ENCODE measurements at regions of chr11 and their contacts with region 1.

Region 1: GRCh38 chr11:114262681-114263512 is 33.3 kb upstream of the NNMT start:
- DNase-seq: peak in 4 of 5 donors; percentile 17 to 28 (median 21)
- H3K4me3 ChIP-seq: no peak overlapping the region
- H3K4me3 Mint-ChIP-seq: no peak overlapping the region
- H3K27ac ChIP-seq: no peak overlapping the region
- H3K27ac Mint-ChIP-seq: no peak overlapping the region
- H3K4me1 ChIP-seq: no peaks in the 10 kb centered on the region
- H3K4me1 Mint-ChIP-seq: peaks cover 0 to 3% (median 0%) of the 10 kb centered on the region in 4 donors
- H3K27me3 ChIP-seq: peaks cover 3% of the 10 kb centered on the region
- H3K27me3 Mint-ChIP-seq: peaks cover 0 to 6% of the 10 kb centered on the region in 2 donors

Region 2: GRCh38 chr11:113896156-113896879 is 366.6 kb before region 1 on chr11:
- CTCF ChIA-PET with region 1: interaction called, 315 read pairs
- POLR2A ChIA-PET with region 1: interaction called, 8 read pairs
- intact Hi-C with region 1: loop called (anchors 1 kb)
- DNase-seq: peak in 3 of 5 donors; percentile 26 to 42 (median 39)
- H3K4me3 ChIP-seq: no peak overlapping the region
- H3K4me3 Mint-ChIP-seq: no peak overlapping the region
- H3K27ac ChIP-seq: no peak overlapping the region
- H3K27ac Mint-ChIP-seq: no peak overlapping the region
- H3K4me1 ChIP-seq: no peaks in the 10 kb centered on the region
- H3K4me1 Mint-ChIP-seq: peaks cover 0 to 2% (median 0%) of the 10 kb centered on the region in 4 donors
- H3K27me3 ChIP-seq: no peaks in the 10 kb centered on the region
- H3K27me3 Mint-ChIP-seq: peaks cover 0 to 1% of the 10 kb centered on the region in 2 donors

Region 3: DNA sequence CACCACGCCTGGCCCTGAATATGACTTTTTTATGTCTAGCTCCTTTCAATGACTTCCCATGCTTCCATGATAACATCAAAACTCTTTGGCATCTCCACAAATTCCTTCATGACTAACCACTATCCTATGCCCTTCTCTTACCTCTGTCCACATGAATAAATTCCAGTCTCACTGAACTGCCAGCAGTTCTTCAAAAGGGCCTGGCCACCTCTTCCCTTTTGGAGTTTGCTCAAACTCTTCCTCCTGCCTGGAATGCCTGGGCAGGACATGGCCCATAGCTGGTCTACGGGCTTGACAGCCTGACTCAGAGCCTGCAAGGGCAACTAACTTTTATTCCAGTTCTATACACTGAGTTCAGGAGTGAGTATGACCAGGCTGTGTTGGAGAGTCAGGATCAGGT is 245.2 kb before region 1 on chr11:
- CTCF ChIA-PET with region 1: interaction called, 15 read pairs
- POLR2A ChIA-PET with region 1: no interaction called
- intact Hi-C with region 1: no loop called
- DNase-seq: no peak
- H3K4me3 ChIP-seq: no peak overlapping the region
- H3K4me3 Mint-ChIP-seq: no peak overlapping the region
- H3K27ac ChIP-seq: no peak overlapping the region
- H3K27ac Mint-ChIP-seq: peak overlapping the region in 1 of 7 donors; percentile 29
- H3K4me1 ChIP-seq: no peaks in the 10 kb centered on the region
- H3K4me1 Mint-ChIP-seq: no peaks in the 10 kb centered on the region
- H3K27me3 ChIP-seq: no peaks in the 10 kb centered on the region
- H3K27me3 Mint-ChIP-seq: peaks cover under 1 to 2% of the 10 kb centered on the region in 2 donors

Region 4: GRCh38 chr11:114044042-114044871 is 218.6 kb before region 1 on chr11:
- CTCF ChIA-PET with region 1: interaction called, 255 read pairs
- POLR2A ChIA-PET with region 1: interaction called, 3 read pairs
- intact Hi-C with region 1: no loop called
- DNase-seq: peak in 1 of 5 donors; percentile 24
- H3K4me3 ChIP-seq: no peak overlapping the region
- H3K4me3 Mint-ChIP-seq: peak overlapping the region in 7 of 8 donors; percentile 23 to 65 (median 57)
- H3K27ac ChIP-seq: no peak overlapping the region
- H3K27ac Mint-ChIP-seq: peak overlapping the region in 6 of 7 donors; percentile 13 to 91 (median 86)
- H3K4me1 ChIP-seq: peaks cover 15% of the 10 kb centered on the region
- H3K4me1 Mint-ChIP-seq: peaks cover 12 to 26% (median 18%) of the 10 kb centered on the region in 4 donors
- H3K27me3 ChIP-seq: no peaks in the 10 kb centered on the region
- H3K27me3 Mint-ChIP-seq: peaks cover 0 to 3% of the 10 kb centered on the region in 2 donors

Region 5: GRCh38 chr11:114159802-114160632 is 102.9 kb before region 1 on chr11:
- CTCF ChIA-PET with region 1: interaction called, 38 read pairs
- POLR2A ChIA-PET with region 1: interaction called, 12 read pairs
- intact Hi-C with region 1: loop called (anchors 1 kb)
- DNase-seq: peak; percentile 97 to 98 (median 98)
- H3K4me3 ChIP-seq: peak overlapping the region in 1 of 2 donors; percentile 26
- H3K4me3 Mint-ChIP-seq: peak overlapping the region; percentile 53 to 86 (median 82)
- H3K27ac ChIP-seq: peak overlapping the region; percentile 33
- H3K27ac Mint-ChIP-seq: peak overlapping the region; percentile 90 to 96 (median 95)
- H3K4me1 ChIP-seq: peaks cover 59% of the 10 kb centered on the region
- H3K4me1 Mint-ChIP-seq: peaks cover 57 to 89% (median 76%) of the 10 kb centered on the region in 4 donors
- H3K27me3 ChIP-seq: no peaks in the 10 kb centered on the region
- H3K27me3 Mint-ChIP-seq: no peaks in the 10 kb centered on the region

Region 6: GRCh38 chr11:114197799-114198500 is 64.9 kb before region 1 on chr11:
- CTCF ChIA-PET with region 1: interaction called, 14 read pairs
- POLR2A ChIA-PET with region 1: no interaction called
- intact Hi-C with region 1: no loop called
- DNase-seq: no peak
- H3K4me3 ChIP-seq: no peak overlapping the region
- H3K4me3 Mint-ChIP-seq: no peak overlapping the region
- H3K27ac ChIP-seq: no peak overlapping the region
- H3K27ac Mint-ChIP-seq: peak overlapping the region in 1 of 7 donors; percentile 66
- H3K4me1 ChIP-seq: peaks cover 8% of the 10 kb centered on the region
- H3K4me1 Mint-ChIP-seq: peaks cover 5 to 21% (median 14%) of the 10 kb centered on the region in 4 donors
- H3K27me3 ChIP-seq: no peaks in the 10 kb centered on the region
- H3K27me3 Mint-ChIP-seq: no peaks in the 10 kb centered on the region

Region 7: GRCh38 chr11:115103921-115104320 is 841.0 kb after region 1 on chr11:
- CTCF ChIA-PET with region 1: no interaction called
- POLR2A ChIA-PET with region 1: no interaction called
- intact Hi-C with region 1: no loop called
- DNase-seq: no peak
- H3K4me3 ChIP-seq: no peak overlapping the region
- H3K4me3 Mint-ChIP-seq: no peak overlapping the region
- H3K27ac ChIP-seq: no peak overlapping the region
- H3K27ac Mint-ChIP-seq: no peak overlapping the region
- H3K4me1 ChIP-seq: no peaks in the 10 kb centered on the region
- H3K4me1 Mint-ChIP-seq: no peaks in the 10 kb centered on the region
- H3K27me3 ChIP-seq: no peaks in the 10 kb centered on the region
- H3K27me3 Mint-ChIP-seq: peaks cover 5% of the 10 kb centered on the region in 2 donors

Measured in CD4-positive, alpha-beta memory T cell (primary cell).